ENCODE measurements at regions of chr1 and their contacts with region 1.

Region 1: GRCh38 chr1:44237721-44238457 is 24.6 kb downstream of the DMAP1 start:
- DNase-seq: peak; percentile 82 to 92 (median 91)
- H3K4me3 ChIP-seq: peak overlapping the region in 3 of 7 experiments; percentile 35 to 60 (median 48)
- H3K27ac ChIP-seq: no peak overlapping the region
- H3K4me1 ChIP-seq: peaks cover 0 to 28% (median 25%) of the 10 kb centered on the region in 4 experiments
- H3K27me3 ChIP-seq: no peaks in the 10 kb centered on the region

Region 2: GRCh38 chr1:44227211-44227610 is 10.7 kb before region 1 on chr1:
- CTCF ChIA-PET with region 1: interaction called, 140 read pairs
- POLR2A ChIA-PET with region 1: no interaction called
- DNase-seq: peak in 2 of 3 donors; percentile 60
- H3K4me3 ChIP-seq: no peak overlapping the region
- H3K27ac ChIP-seq: no peak overlapping the region
- H3K4me1 ChIP-seq: peaks cover 2 to 24% (median 18%) of the 10 kb centered on the region in 4 experiments
- H3K27me3 ChIP-seq: no peaks in the 10 kb centered on the region